Activated CD4-positive, alpha-beta memory T cell treated with anti-CD3 and anti-CD28 coated beads, Interleukin-2, amount 10 ng/mL, durations not matched to agents 7 days and 5 days (primary cell): ENCODE measurements at regions of chr5 and their contacts with region 1.

Region 1: DNA sequence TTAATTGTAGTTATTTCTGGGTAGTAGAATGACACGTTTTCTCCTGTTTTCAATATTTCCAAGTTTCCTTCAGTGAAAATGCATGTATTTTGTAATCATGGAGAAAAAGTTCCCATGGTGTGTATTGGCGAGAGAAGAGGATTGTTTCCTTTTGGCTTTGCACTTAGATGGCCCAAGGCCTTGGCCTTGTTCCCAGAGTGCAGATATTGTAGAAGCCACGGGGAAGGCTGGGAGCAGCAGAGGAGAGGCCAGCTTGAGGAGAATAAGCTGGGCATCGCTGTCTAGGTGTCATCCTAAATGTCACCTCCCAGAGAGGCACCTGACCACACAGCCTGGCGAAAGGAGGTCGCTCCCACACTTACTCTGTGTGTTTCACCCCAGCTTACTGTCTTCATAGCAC is 43.9 kb downstream of the IRF1 start:
- DNase-seq: no peak
- H3K4me3 Mint-ChIP-seq: no peak overlapping the region
- H3K27ac Mint-ChIP-seq: no peak overlapping the region
- H3K4me1 Mint-ChIP-seq: peaks cover 60% of the 10 kb centered on the region
- H3K27me3 Mint-ChIP-seq: no peaks in the 10 kb centered on the region

Region 2: DNA sequence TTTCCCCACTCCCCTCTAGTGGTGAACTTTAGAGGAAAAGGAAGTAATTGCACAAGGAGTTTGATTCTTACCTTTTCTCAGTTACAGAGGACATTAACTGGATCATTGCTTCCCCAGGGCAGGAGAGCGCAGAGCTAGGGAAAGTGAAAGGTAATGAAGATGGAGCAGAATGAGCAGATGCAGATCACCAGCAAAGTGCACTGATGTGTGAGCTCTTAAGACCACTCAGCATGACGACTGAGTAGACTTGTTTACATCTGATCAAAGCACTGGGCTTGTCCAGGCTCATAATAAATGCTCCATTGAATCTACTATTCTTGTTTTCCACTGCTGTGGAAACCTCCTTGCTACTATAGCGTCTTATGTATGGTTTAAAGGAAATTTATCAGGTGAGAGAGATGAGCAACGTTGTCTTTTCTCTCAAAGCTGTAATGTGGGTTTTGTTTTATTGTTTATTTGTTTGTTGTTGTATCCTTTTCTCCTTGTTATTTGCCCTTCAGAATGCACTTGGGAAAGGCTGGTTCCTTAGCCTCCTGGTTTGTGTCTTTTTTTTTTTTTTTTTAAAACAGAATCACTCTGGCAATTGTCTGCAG is 51.9 kb before region 1 on chr5:
- CTCF ChIA-PET with region 1: no interaction called
- POLR2A ChIA-PET with region 1: no interaction called
- DNase-seq: no peak
- H3K4me3 Mint-ChIP-seq: no peak overlapping the region
- H3K27ac Mint-ChIP-seq: no peak overlapping the region
- H3K4me1 Mint-ChIP-seq: peaks cover 68% of the 10 kb centered on the region
- H3K27me3 Mint-ChIP-seq: no peaks in the 10 kb centered on the region

Region 3: DNA sequence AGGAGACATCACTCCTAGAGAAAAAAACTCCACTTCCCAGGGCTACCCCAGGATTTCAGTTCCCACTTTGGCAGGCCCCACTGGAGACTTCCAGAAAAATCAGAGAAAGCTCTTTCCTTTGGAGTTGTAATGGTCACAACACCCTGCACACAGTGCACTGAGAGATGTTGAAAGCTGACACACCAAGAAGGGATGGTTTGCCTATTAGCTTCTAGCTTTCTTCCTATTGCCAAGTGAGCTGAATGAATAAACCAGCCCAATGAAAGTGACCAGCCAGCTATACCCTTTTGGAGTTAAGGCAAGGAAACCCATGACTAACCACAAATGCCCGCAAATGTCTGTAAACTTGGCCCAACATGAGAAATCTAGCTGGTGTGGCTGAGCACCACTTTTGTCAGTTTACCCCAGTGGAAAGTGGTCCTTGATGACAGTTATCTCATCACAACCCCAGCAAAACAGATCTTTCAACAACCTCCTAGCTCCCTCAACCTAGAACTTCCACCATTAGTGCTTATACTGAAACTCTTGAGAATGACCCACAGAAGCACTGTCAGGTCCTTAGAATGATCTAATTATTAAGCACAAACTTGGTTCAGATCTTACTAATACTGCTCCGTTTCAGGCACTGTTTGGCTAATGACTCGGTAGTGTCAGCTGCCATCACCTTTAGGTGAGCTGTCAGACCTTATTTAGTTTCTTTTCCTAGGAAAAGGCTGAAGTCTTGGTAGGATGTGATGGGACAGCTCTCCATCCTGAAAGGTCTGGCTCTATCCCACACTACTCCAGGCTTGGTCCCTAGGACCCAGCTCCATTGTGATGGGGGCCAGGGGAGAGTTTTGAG is 32.7 kb after region 1 on chr5:
- CTCF ChIA-PET with region 1: no interaction called
- POLR2A ChIA-PET with region 1: interaction called, 12 read pairs
- DNase-seq: no peak
- H3K4me3 Mint-ChIP-seq: no peak overlapping the region
- H3K27ac Mint-ChIP-seq: peak overlapping the region; percentile 58
- H3K4me1 Mint-ChIP-seq: peaks cover 87% of the 10 kb centered on the region
- H3K27me3 Mint-ChIP-seq: no peaks in the 10 kb centered on the region